Naive thymus-derived CD4-positive, alpha-beta T cell (primary cell): ENCODE measurements at regions of chr1 and their contacts with region 1.

Region 1: GRCh38 chr1:26279456-26280332 is at the start of gene SH3BGRL3:
- DNase-seq: peak; percentile 73 to 89 (median 84)
- ATAC-seq: peak; percentile 77
- H3K4me3 ChIP-seq: peak within 1 kb of the TSS; percentile 58
- H3K4me3 Mint-ChIP-seq: peak within 1 kb of the TSS; percentile 80 to 98 (median 89)
- H3K27ac ChIP-seq: peak within 1 kb of the TSS; percentile 86
- H3K27ac Mint-ChIP-seq: peak within 1 kb of the TSS; percentile 83 to 99 (median 93)
- H3K4me1 ChIP-seq: peaks cover 80 to 82% of the 10 kb centered on the region in 2 donors
- H3K4me1 Mint-ChIP-seq: peaks cover 60 to 85% (median 71%) of the 10 kb centered on the region in 7 donors
- H3K27me3 ChIP-seq: no peaks in the 10 kb centered on the region
- H3K27me3 Mint-ChIP-seq: no peaks in the 10 kb centered on the region
- total RNA-seq, gene SH3BGRL3: 156 to 636 (median 224) TPM

Region 2: GRCh38 chr1:26111530-26112406 is 167.9 kb before region 1 on chr1 and contains the start of gene PDIK1L:
- CTCF ChIA-PET with region 1: interaction called, 4 read pairs
- POLR2A ChIA-PET with region 1: no interaction called
- intact Hi-C with region 1: loop called in 1 of 2 experiments (anchors 5 kb)
- DNase-seq: peak; percentile 91 to 95 (median 94)
- ATAC-seq: peak; percentile 93
- H3K4me3 ChIP-seq: peak within 1 kb of the TSS; percentile 93
- H3K4me3 Mint-ChIP-seq: peak within 1 kb of the TSS; percentile 86 to 99 (median 93)
- H3K27ac ChIP-seq: peak within 1 kb of the TSS; percentile 84
- H3K27ac Mint-ChIP-seq: peak within 1 kb of the TSS; percentile 84 to 98 (median 92)
- H3K4me1 ChIP-seq: peaks cover 12 to 19% of the 10 kb centered on the region in 2 donors
- H3K4me1 Mint-ChIP-seq: peaks cover 6 to 44% (median 34%) of the 10 kb centered on the region in 7 donors
- H3K27me3 ChIP-seq: no peaks in the 10 kb centered on the region
- H3K27me3 Mint-ChIP-seq: no peaks in the 10 kb centered on the region
- total RNA-seq, gene PDIK1L: 9.1 to 29.6 (median 20.3) TPM

Region 3: DNA sequence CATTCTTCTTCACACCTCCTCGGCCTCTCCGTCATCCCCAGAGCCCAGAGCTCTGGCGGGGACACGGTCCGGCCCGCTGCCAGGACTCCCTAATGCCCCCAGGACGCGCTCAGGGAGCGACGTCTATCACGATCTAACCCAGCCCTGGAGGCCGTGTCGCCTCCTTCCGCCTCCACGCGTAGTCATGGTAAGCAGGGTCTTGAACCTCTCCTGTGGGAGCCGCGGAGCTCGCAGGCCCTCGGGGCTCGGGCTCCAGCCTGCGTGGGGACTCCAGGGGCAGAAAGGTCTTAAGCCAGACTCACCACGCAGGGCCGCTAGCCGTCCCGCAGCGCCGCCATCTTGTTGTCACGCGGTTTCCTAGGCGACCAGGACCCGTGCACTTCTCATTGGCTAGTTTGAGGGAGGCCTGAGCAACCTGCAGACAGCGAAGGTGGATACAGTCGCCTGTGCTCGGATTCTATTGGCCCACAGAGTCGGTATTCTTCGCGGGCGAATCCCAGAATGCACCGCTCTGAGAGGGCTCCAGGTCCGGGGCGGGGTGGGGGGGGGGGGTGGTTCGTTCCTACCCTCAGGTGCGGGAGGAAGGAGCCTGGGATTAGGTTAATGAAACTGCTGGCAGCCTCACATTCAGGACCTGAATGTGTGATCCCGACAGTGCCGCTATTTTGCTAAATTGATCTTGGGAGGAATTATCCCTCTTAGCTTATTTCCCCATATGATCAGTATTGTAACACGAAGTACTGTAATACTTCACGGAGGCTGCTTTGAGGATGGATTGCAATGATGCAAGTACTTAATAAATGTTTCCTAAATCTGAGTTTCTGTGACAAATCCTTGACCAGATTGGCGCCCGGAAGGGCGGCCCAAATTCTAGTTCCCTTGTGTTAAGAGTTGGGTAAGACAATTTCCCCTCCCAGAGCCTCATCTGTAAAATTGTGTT is 26.9 kb after region 1 on chr1 and contains the start of gene UBXN11:
- CTCF ChIA-PET with region 1: interaction called, 131 read pairs
- POLR2A ChIA-PET with region 1: interaction called, 1,967 read pairs
- intact Hi-C with region 1: loop called in 1 of 2 experiments (anchors 1 kb)
- DNase-seq: peak; percentile 66 to 95 (median 89)
- ATAC-seq: peak; percentile 99
- H3K4me3 ChIP-seq: peak within 1 kb of the TSS; percentile 87
- H3K4me3 Mint-ChIP-seq: peak within 1 kb of the TSS; percentile 93 to 99 (median 98)
- H3K27ac ChIP-seq: peak within 1 kb of the TSS; percentile 76
- H3K27ac Mint-ChIP-seq: peak within 1 kb of the TSS; percentile 90 to 99 (median 96)
- H3K4me1 ChIP-seq: peaks cover 16 to 31% of the 10 kb centered on the region in 2 donors
- H3K4me1 Mint-ChIP-seq: peaks cover 25 to 58% (median 34%) of the 10 kb centered on the region in 7 donors
- H3K27me3 ChIP-seq: no peaks in the 10 kb centered on the region
- H3K27me3 Mint-ChIP-seq: no peaks in the 10 kb centered on the region
- total RNA-seq, gene UBXN11: 35.7 to 131 (median 124) TPM

Region 4: GRCh38 chr1:26363549-26364448 is 84.1 kb after region 1 on chr1:
- CTCF ChIA-PET with region 1: interaction called, 31 read pairs
- POLR2A ChIA-PET with region 1: interaction called, 8 read pairs
- intact Hi-C with region 1: loop called (anchors 1 kb)
- DNase-seq: peak; percentile 71 to 87 (median 82)
- ATAC-seq: peak; percentile 84
- H3K4me3 ChIP-seq: no peak overlapping the region
- H3K4me3 Mint-ChIP-seq: peak overlapping the region in 6 of 10 donors; percentile 39 to 72 (median 40)
- H3K27ac ChIP-seq: no peak overlapping the region
- H3K27ac Mint-ChIP-seq: peak overlapping the region in 4 of 9 donors; percentile 20 to 52 (median 40)
- H3K4me1 ChIP-seq: peaks cover 30 to 44% of the 10 kb centered on the region in 2 donors
- H3K4me1 Mint-ChIP-seq: peaks cover 28 to 53% (median 47%) of the 10 kb centered on the region in 7 donors
- H3K27me3 ChIP-seq: no peaks in the 10 kb centered on the region
- H3K27me3 Mint-ChIP-seq: peaks cover 7 to 37% (median 16%) of the 10 kb centered on the region in 5 donors

Region 5: GRCh38 chr1:26391450-26391849 is 111.8 kb after region 1 on chr1:
- CTCF ChIA-PET with region 1: interaction called, 15 read pairs
- POLR2A ChIA-PET with region 1: interaction called, 11 read pairs
- intact Hi-C with region 1: loop called (anchors 1 kb)
- DNase-seq: peak in 5 of 9 donors; percentile 17 to 46 (median 43)
- ATAC-seq: peak; percentile 86
- H3K4me3 ChIP-seq: no peak overlapping the region
- H3K4me3 Mint-ChIP-seq: peak overlapping the region in 1 of 10 donors; percentile 55
- H3K27ac ChIP-seq: no peak overlapping the region
- H3K27ac Mint-ChIP-seq: peak overlapping the region in 2 of 9 donors; percentile 1 to 64
- H3K4me1 ChIP-seq: peaks cover 6 to 18% of the 10 kb centered on the region in 2 donors
- H3K4me1 Mint-ChIP-seq: peaks cover 8 to 49% (median 18%) of the 10 kb centered on the region in 7 donors
- H3K27me3 ChIP-seq: no peaks in the 10 kb centered on the region
- H3K27me3 Mint-ChIP-seq: peaks cover 0 to 14% (median 0%) of the 10 kb centered on the region in 5 donors

Region 6: DNA sequence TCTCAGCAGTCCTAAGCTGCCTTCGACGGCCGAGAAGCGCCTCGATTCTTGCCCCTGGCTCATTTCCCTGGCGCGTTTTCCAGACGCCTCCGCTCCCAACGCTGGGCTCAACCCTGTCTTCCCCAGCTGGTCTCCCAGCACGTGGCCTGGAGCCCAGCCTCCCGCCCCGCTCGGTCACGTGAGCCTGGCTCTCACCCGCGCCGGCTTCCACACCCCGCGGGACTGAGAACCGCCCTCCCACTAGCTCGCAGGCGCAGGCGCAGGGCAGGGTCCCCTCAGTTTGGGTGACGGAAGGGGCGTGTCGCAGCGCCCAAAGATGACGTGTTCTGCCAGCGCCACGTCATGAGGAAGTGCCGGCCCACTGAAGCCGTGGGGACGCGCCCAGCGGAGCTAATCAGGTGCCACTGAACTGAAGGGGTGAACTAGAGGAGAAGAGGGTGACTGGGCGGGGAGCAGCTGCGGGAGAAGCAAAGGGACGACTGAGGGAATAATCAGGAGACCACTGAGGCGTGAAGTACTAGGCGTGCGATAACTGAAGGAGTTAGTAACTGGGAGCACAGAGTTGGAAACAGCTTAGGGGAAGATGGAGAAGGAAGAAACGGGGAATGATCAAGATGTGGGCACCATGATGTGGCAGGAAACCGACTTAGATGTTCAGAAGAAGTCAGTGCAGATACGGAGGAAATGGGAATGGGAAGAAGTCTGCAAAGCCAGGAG is 152.4 kb after region 1 on chr1 and contains the start of gene DHDDS:
- CTCF ChIA-PET with region 1: interaction called, 3 read pairs
- POLR2A ChIA-PET with region 1: interaction called, 6 read pairs
- intact Hi-C with region 1: loop called (anchors 1 to 2 kb)
- DNase-seq: peak; percentile 95 to 98 (median 97)
- ATAC-seq: peak; percentile 99
- H3K4me3 ChIP-seq: peak within 1 kb of the TSS; percentile 88
- H3K4me3 Mint-ChIP-seq: peak within 1 kb of the TSS; percentile 92 to 99 (median 96)
- H3K27ac ChIP-seq: peak within 1 kb of the TSS; percentile 76
- H3K27ac Mint-ChIP-seq: peak within 1 kb of the TSS; percentile 90 to 99 (median 93)
- H3K4me1 ChIP-seq: peaks cover 11 to 15% of the 10 kb centered on the region in 2 donors
- H3K4me1 Mint-ChIP-seq: peaks cover 14 to 26% (median 22%) of the 10 kb centered on the region in 7 donors
- H3K27me3 ChIP-seq: no peaks in the 10 kb centered on the region
- H3K27me3 Mint-ChIP-seq: peaks cover 0 to 15% (median 0%) of the 10 kb centered on the region in 5 donors
- total RNA-seq, gene DHDDS: 28.1 to 58.9 (median 37.7) TPM

Region 7: DNA sequence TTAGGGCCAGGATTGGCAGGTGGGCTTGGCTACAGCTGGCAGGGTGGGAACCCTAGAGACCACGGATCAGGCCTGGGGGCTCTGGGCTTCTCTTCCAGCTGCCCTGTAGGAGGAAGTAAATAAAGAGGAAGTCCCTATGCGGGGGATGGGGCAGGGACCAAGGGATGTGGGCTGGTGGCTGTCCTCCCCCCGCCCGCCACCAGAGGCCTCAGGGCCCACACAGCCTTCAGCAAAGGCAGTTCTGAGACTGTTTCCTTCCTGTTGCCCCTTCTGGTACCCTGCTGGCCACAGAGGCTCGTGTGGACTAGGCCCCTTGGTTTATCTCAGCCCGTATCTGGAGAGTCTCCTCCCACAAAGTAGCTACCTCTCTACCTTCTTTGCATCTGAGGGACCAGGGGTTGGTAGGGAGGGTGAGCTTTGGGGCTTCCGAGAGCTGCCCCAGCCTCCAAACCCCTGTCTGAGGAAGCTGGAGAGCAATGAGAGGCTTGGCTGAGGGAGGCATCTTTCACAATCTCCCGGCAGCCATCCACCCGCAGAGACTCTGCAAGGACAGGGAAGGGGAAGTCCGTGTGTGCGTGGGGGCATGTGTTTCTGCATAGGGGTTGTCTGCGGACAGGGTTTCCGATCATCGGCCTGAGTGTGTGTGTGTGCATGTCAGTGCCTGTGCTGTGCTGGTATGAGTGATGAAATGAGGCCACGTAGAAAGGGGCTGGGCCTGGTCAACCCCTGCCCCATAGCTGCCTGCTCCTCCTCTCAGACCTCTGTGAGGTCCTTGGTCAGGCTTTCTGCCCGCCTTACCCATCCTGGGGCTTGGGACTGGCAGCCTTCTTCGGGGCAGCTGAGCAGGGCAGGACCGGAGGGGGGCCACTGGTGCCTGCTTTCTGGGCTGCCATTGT is 262.4 kb after region 1 on chr1:
- CTCF ChIA-PET with region 1: no interaction called
- POLR2A ChIA-PET with region 1: no interaction called
- intact Hi-C with region 1: loop called in 1 of 2 experiments (anchors 10 kb)
- DNase-seq: peak; percentile 56 to 84 (median 66)
- ATAC-seq: peak; percentile 72
- H3K4me3 ChIP-seq: peak overlapping the region; percentile 33
- H3K4me3 Mint-ChIP-seq: peak overlapping the region; percentile 75 to 91 (median 84)
- H3K27ac ChIP-seq: peak overlapping the region; percentile 71
- H3K27ac Mint-ChIP-seq: peak overlapping the region; percentile 82 to 99 (median 96)
- H3K4me1 ChIP-seq: peaks cover 77 to 89% of the 10 kb centered on the region in 2 donors
- H3K4me1 Mint-ChIP-seq: peaks cover 80 to 94% (median 83%) of the 10 kb centered on the region in 7 donors
- H3K27me3 ChIP-seq: no peaks in the 10 kb centered on the region
- H3K27me3 Mint-ChIP-seq: no peaks in the 10 kb centered on the region